Activated naive CD4-positive, alpha-beta T cell treated with anti-CD3 and anti-CD28 coated beads for 36 hours (primary cell): ENCODE measurements at regions of chr5 and their contacts with region 1.

Region 1: GRCh38 chr5:113606298-113607134 is 93.0 kb downstream of the YTHDC2 start:
- DNase-seq: peak; percentile 49
- H3K4me3 Mint-ChIP-seq: no peak overlapping the region
- H3K27ac Mint-ChIP-seq: no peak overlapping the region
- H3K4me1 Mint-ChIP-seq: peaks cover 3% of the 10 kb centered on the region
- H3K27me3 Mint-ChIP-seq: peaks cover 3% of the 10 kb centered on the region

Region 2: DNA sequence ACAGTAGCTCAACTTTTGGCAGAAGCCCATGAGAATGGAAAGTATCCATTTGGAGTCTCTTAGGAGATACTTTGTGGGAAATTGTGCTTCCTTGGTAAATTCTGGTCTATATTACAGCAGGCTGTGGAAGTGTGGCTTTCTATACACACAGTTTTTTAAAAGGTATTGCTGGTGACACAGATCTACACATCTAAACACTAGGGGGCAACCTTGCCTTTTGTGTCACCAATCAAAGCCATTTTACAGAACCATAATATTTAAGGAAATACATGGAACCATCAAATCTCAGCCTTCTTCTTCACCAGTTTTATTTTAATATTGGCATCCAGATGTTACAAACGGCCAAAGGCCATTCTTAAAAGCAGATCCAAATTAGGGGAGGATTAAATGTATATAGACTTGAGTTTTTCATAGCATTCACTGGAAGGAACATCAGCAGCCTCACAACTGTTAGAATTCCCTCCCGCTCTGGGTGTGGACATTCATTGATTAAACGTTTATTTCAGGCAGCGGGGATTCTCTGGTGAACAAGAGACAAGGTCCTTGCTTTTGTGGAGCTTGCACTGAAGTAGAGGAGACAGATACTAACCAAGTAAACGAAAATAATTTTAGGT is 1055.0 kb before region 1 on chr5:
- CTCF ChIA-PET with region 1: no interaction called
- intact Hi-C with region 1: loop called (anchors 5 kb)
- DNase-seq: peak; percentile 45
- H3K4me3 Mint-ChIP-seq: no peak overlapping the region
- H3K27ac Mint-ChIP-seq: no peak overlapping the region
- H3K4me1 Mint-ChIP-seq: no peaks in the 10 kb centered on the region
- H3K27me3 Mint-ChIP-seq: no peaks in the 10 kb centered on the region

Region 3: GRCh38 chr5:112995764-112996618 is 610.5 kb before region 1 on chr5:
- CTCF ChIA-PET with region 1: interaction called, 6 read pairs
- intact Hi-C with region 1: loop called (anchors 1 kb)
- DNase-seq: peak; percentile 85
- H3K4me3 Mint-ChIP-seq: no peak overlapping the region
- H3K27ac Mint-ChIP-seq: no peak overlapping the region
- H3K4me1 Mint-ChIP-seq: peaks cover 14% of the 10 kb centered on the region
- H3K27me3 Mint-ChIP-seq: no peaks in the 10 kb centered on the region

Region 4: DNA sequence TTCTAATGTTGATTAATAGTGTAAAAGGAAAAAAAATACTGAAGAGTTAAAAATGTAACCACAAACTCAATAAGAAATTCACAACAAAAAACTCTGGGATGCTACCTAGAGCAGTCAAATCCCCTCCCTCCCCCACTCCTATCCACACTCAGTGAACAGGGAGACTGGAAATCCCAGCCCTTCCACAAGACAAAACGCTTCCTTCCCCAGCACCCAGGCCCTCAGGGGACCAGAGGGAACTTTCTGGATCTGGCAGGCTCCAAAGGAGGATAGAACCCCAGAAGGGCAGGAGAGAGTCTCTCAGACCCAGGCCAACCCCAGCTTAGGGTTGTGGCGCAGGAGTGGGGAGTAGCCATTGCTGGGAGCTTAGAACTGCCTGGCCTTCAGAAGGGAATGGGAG is 575.0 kb before region 1 on chr5:
- CTCF ChIA-PET with region 1: no interaction called
- intact Hi-C with region 1: no loop called
- DNase-seq: no peak
- H3K4me3 Mint-ChIP-seq: no peak overlapping the region
- H3K27ac Mint-ChIP-seq: no peak overlapping the region
- H3K4me1 Mint-ChIP-seq: no peaks in the 10 kb centered on the region
- H3K27me3 Mint-ChIP-seq: no peaks in the 10 kb centered on the region

Region 5: GRCh38 chr5:113043491-113043931 is 563.0 kb before region 1 on chr5:
- CTCF ChIA-PET with region 1: no interaction called
- intact Hi-C with region 1: loop called (anchors 2 kb)
- DNase-seq: peak; percentile 38
- H3K4me3 Mint-ChIP-seq: no peak overlapping the region
- H3K27ac Mint-ChIP-seq: no peak overlapping the region
- H3K4me1 Mint-ChIP-seq: no peaks in the 10 kb centered on the region
- H3K27me3 Mint-ChIP-seq: no peaks in the 10 kb centered on the region

Region 6: DNA sequence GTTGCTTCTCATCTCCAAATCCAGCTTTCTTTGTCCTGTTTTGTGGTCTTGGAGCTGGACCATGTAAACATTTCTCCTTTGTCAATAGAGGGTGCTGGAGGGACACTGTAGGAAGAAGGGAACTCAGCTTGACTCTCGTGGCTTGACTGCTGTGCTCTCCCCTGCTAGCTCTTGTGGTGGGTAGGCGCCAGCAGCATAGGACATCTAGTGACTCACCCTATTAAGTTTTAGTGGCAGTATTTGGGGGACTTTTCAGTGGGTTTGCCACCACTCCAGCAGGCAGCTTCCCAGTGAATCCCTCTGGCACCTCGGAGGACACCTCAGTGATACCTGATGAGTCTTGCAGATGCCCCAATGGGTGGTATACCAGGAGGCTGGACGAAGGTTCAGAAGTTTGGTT is 269.5 kb before region 1 on chr5:
- CTCF ChIA-PET with region 1: interaction called, 10 read pairs
- intact Hi-C with region 1: loop called (anchors 1 kb)
- DNase-seq: no peak
- H3K4me3 Mint-ChIP-seq: no peak overlapping the region
- H3K27ac Mint-ChIP-seq: no peak overlapping the region
- H3K4me1 Mint-ChIP-seq: peaks cover 6% of the 10 kb centered on the region
- H3K27me3 Mint-ChIP-seq: peaks cover 7% of the 10 kb centered on the region

Region 7: DNA sequence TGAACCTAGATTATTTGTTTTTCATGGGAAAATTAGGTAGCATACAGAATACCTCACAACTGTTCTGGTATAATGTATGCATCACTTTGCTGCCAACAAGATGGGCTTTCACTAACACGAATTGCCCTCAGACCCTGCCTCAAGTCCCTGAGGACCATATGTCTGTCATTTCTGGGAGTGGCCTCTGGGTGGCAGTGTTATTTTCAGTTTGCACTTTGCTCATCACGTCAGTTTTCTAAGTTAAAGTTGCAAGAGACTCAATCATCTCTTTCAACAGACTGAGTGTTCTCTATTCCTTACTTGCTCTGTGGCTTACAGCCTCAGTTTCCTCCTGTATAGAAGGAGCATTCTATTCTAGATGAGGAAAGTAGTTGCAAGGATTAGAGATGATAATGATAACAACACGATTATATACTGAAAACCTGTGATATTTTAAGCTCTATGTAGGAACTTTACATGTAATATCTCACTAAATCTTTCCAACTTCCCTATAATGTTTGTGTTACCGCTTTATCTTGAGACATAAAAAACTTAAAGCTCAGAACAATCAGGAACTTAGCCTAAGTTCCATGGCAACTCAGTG is 227.5 kb before region 1 on chr5:
- CTCF ChIA-PET with region 1: interaction called, 18 read pairs
- intact Hi-C with region 1: loop called (anchors 1 kb)
- DNase-seq: peak; percentile 81
- H3K4me3 Mint-ChIP-seq: no peak overlapping the region
- H3K27ac Mint-ChIP-seq: no peak overlapping the region
- H3K4me1 Mint-ChIP-seq: peaks cover 19% of the 10 kb centered on the region
- H3K27me3 Mint-ChIP-seq: peaks cover 8% of the 10 kb centered on the region

Region 8: DNA sequence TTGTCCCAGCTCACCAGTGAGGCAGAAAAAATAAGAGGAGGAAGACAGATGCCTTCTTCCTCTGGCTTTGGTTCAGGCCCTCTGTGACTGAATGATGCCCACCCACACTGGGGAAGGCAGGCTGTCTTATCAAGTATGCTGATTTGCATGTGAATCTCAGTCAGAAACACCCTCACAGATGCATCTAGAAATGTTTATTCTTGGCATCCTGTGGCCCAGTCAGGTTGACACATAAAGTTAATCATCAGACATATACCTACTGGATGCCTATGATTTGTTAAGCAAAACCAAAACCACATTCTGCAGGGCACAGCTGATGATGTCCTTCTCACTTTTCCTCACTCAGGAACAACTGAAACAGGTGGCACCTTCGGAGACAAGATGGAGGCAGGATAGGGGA is 512.0 kb after region 1 on chr5:
- CTCF ChIA-PET with region 1: no interaction called
- intact Hi-C with region 1: no loop called
- DNase-seq: no peak
- H3K4me3 Mint-ChIP-seq: no peak overlapping the region
- H3K27ac Mint-ChIP-seq: no peak overlapping the region
- H3K4me1 Mint-ChIP-seq: no peaks in the 10 kb centered on the region
- H3K27me3 Mint-ChIP-seq: no peaks in the 10 kb centered on the region